Naive thymus-derived CD4-positive, alpha-beta T cell (primary cell): ENCODE measurements at regions of chr1 and their contacts with region 1.

Region 1: GRCh38 chr1:212477014-212477679 is 44.4 kb downstream of the NENF start:
- DNase-seq: peak; percentile 34 to 72 (median 65)
- ATAC-seq: peak; percentile 96
- H3K4me3 ChIP-seq: no peak overlapping the region
- H3K4me3 Mint-ChIP-seq: peak overlapping the region in 7 of 10 donors; percentile 12 to 65 (median 43)
- H3K27ac ChIP-seq: no peak overlapping the region
- H3K27ac Mint-ChIP-seq: peak overlapping the region in 1 of 9 donors; percentile 35
- H3K4me1 ChIP-seq: peaks cover 0 to 12% of the 10 kb centered on the region in 2 donors
- H3K4me1 Mint-ChIP-seq: peaks cover 3 to 22% (median 13%) of the 10 kb centered on the region in 7 donors
- H3K27me3 ChIP-seq: no peaks in the 10 kb centered on the region
- H3K27me3 Mint-ChIP-seq: peaks cover 0 to 30% (median 4%) of the 10 kb centered on the region in 5 donors

Region 2: DNA sequence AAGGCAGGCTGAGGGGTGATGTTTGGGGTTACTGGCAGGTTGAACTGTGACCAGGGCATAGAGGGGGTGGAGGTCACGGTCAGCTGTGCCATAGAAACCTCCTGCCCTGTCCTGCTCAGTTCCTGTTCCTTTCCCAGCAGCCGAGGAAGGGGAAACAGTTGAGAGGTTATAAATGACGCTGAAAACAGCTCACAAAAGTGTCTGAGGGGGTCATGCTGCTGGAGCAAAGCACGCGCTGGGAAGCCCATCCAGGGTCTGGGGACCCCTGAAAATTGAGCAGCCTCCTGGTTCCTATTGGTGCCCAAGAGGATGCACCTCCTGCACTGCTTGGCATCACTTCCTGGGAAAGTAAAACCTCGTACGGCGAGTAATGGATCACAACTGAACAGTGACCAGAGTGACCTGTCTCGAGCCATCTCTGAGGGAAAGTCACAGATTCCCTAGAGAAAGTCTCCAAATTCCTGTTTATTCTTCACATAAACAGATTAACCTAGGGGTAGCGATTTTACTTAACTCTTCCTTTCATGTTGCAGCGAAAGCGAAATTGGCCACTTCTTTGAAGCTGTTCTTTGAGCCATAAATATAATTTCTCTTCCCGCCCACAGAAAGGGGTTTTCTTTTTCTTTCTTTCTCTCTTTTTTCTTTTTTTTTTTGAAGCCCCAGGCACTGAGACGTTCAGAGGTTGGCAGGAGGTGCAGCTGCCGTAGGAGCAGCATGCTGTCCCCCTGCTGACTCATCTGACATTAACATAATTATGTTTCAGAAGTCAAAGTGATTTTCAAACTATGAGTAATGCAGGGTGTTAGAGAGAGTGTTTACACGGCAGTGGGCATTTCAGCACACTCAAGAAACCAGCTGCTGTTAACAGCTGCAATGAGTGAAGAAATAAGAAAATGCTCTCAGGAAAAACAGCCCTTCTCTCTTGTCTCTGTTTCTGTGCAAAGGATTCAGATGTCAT is 89.7 kb after region 1 on chr1:
- CTCF ChIA-PET with region 1: interaction called, 7 read pairs
- POLR2A ChIA-PET with region 1: no interaction called
- intact Hi-C with region 1: loop called in 1 of 2 experiments (anchors 1 kb)
- DNase-seq: peak in 7 of 9 donors; percentile 23 to 66 (median 30)
- ATAC-seq: peak; percentile 96
- H3K4me3 ChIP-seq: peak overlapping the region; percentile 78
- H3K4me3 Mint-ChIP-seq: peak overlapping the region; percentile 80 to 98 (median 88)
- H3K27ac ChIP-seq: peak overlapping the region; percentile 31
- H3K27ac Mint-ChIP-seq: peak overlapping the region; percentile 62 to 90 (median 77)
- H3K4me1 ChIP-seq: peaks cover 0 to 6% of the 10 kb centered on the region in 2 donors
- H3K4me1 Mint-ChIP-seq: peaks cover 9 to 27% (median 15%) of the 10 kb centered on the region in 7 donors
- H3K27me3 ChIP-seq: no peaks in the 10 kb centered on the region
- H3K27me3 Mint-ChIP-seq: peaks cover 0 to 43% (median 0%) of the 10 kb centered on the region in 5 donors

Region 3: GRCh38 chr1:212608209-212608955 is 131.2 kb after region 1 on chr1 and contains the start of gene ATF3:
- CTCF ChIA-PET with region 1: no interaction called
- POLR2A ChIA-PET with region 1: no interaction called
- intact Hi-C with region 1: loop called (anchors 1 to 10 kb)
- DNase-seq: peak; percentile 27 to 90 (median 47)
- ATAC-seq: peak; percentile 87
- H3K4me3 ChIP-seq: peak within 1 kb of the TSS; percentile 70
- H3K4me3 Mint-ChIP-seq: peak within 1 kb of the TSS; percentile 90 to 98 (median 95)
- H3K27ac ChIP-seq: no peak within 1 kb of the TSS
- H3K27ac Mint-ChIP-seq: peak within 1 kb of the TSS; percentile 40 to 98 (median 76)
- H3K4me1 ChIP-seq: peaks cover 17 to 23% of the 10 kb centered on the region in 2 donors
- H3K4me1 Mint-ChIP-seq: peaks cover 17 to 55% (median 21%) of the 10 kb centered on the region in 7 donors
- H3K27me3 ChIP-seq: peaks cover 17 to 26% of the 10 kb centered on the region in 2 donors
- H3K27me3 Mint-ChIP-seq: peaks cover 47 to 66% (median 58%) of the 10 kb centered on the region in 5 donors
- total RNA-seq, gene ATF3: 0.57 to 83.4 (median 12.5) TPM

Region 4: GRCh38 chr1:212665241-212666115 is 188.3 kb after region 1 on chr1:
- CTCF ChIA-PET with region 1: no interaction called
- POLR2A ChIA-PET with region 1: no interaction called
- intact Hi-C with region 1: loop called (anchors 1 kb)
- DNase-seq: peak; percentile 57 to 85 (median 78)
- ATAC-seq: peak; percentile 94
- H3K4me3 ChIP-seq: peak overlapping the region; percentile 51
- H3K4me3 Mint-ChIP-seq: peak overlapping the region; percentile 78 to 92 (median 84)
- H3K27ac ChIP-seq: no peak overlapping the region
- H3K27ac Mint-ChIP-seq: peak overlapping the region in 1 of 9 donors; percentile 64
- H3K4me1 ChIP-seq: peaks cover 0 to 6% of the 10 kb centered on the region in 2 donors
- H3K4me1 Mint-ChIP-seq: peaks cover 4 to 29% (median 5%) of the 10 kb centered on the region in 7 donors
- H3K27me3 ChIP-seq: no peaks in the 10 kb centered on the region
- H3K27me3 Mint-ChIP-seq: peaks cover 0 to 23% (median 10%) of the 10 kb centered on the region in 5 donors

Region 5: DNA sequence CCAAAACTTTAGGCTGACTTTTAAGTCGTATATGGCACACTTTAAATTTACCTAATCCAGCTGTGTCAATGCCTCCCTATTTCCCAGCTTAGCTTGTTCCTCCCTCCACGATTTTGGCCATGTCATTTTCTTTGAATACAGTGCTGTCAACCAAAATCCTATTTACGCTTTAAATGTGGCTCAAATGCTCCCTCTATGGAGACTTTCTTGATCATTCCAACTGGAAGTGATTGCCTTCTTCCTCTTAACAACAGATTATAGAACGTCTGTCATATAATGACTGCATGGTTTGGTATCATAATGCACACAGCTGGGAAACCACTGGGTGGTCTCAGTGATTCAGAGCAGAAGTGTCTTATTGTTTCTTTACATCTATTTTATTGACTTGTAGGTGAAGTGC is 241.4 kb after region 1 on chr1:
- CTCF ChIA-PET with region 1: no interaction called
- POLR2A ChIA-PET with region 1: no interaction called
- intact Hi-C with region 1: no loop called
- DNase-seq: no peak
- ATAC-seq: no peak
- H3K4me3 ChIP-seq: no peak overlapping the region
- H3K4me3 Mint-ChIP-seq: no peak overlapping the region
- H3K27ac ChIP-seq: no peak overlapping the region
- H3K27ac Mint-ChIP-seq: no peak overlapping the region
- H3K4me1 ChIP-seq: no peaks in the 10 kb centered on the region
- H3K4me1 Mint-ChIP-seq: peaks cover 0 to 30% (median 7%) of the 10 kb centered on the region in 7 donors
- H3K27me3 ChIP-seq: no peaks in the 10 kb centered on the region
- H3K27me3 Mint-ChIP-seq: peaks cover 0 to 24% (median 6%) of the 10 kb centered on the region in 5 donors

Region 6: DNA sequence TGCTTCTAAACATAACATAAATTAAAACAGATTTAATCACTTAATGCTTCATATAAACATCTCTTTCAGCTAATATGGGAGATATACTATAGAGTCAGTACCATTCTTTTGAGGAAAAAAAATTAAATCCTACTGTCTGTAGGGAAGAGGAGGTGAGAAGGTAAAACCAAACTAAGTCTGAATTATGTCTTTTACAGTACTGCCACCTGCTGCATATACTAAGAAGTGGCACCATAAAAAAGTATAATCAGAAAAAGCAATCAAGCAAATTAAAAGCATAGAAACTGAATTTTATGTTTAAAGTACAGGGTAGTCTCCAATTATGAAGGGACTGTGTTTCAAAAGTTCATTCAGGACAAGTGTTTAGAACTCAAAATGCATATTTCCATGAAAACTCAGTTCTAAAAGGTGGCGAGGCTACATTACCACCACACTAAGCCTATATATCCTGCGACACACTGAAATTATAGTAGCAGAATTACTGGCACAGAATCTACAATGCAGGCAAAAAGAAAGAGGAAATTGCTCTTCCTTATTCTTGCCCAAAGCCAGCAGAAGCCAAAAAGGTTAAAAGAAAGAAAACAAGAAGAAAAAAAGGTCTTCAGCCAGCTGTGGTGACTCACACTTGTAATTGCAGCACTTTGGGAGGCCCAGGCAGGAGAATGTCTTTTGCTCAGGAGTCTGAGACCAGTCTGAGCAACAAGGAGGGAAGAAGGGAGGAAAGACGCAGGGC is 305.4 kb after region 1 on chr1:
- CTCF ChIA-PET with region 1: interaction called, 5 read pairs
- POLR2A ChIA-PET with region 1: no interaction called
- intact Hi-C with region 1: loop called (anchors 1 kb)
- DNase-seq: peak in 6 of 9 donors; percentile 4 to 45 (median 34)
- ATAC-seq: peak; percentile 73
- H3K4me3 ChIP-seq: no peak overlapping the region
- H3K4me3 Mint-ChIP-seq: no peak overlapping the region
- H3K27ac ChIP-seq: no peak overlapping the region
- H3K27ac Mint-ChIP-seq: peak overlapping the region in 1 of 9 donors; percentile 31
- H3K4me1 ChIP-seq: no peaks in the 10 kb centered on the region
- H3K4me1 Mint-ChIP-seq: peaks cover 0 to 18% (median 6%) of the 10 kb centered on the region in 7 donors
- H3K27me3 ChIP-seq: no peaks in the 10 kb centered on the region
- H3K27me3 Mint-ChIP-seq: no peaks in the 10 kb centered on the region